OCI-LY7 (cell line): ENCODE measurements at regions of chr12 and their contacts with region 1.

Region 1: DNA sequence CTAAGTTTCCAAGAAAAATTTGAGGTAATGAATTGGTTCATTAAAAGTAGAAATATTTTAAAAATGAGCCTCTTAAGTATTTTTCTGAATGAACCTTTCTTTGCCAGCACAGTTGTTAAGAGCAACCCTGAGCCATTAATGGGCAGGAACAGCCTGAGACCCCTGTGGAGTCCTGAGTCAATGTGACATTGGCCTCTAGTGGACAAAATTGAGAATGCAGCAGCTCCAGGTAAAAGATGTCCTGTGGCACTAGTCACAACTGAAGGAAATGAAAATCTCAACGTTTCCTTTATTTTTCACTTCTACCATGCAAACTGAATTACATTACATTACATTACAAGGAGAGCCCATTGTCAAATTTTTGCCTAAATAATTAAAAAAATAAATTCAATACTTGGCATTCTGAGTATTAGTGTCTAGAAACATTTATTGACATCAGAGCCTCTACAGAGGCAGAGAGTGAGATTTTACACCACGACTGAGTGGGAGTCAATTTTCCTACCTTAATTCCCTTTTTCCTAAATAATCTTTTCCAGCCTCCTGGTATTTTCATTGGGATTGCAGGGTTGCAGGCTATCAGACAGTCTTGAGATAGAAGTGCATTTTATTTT is 135.7 kb downstream of the PPM1H start:
- DNase-seq: peak; percentile 76
- H3K4me3 ChIP-seq: no peak overlapping the region
- H3K27ac ChIP-seq: no peak overlapping the region
- H3K4me1 ChIP-seq: no peaks in the 10 kb centered on the region
- CTCF ChIP-seq: peak; percentile 94

Region 2: GRCh38 chr12:62581288-62582064 is 217.8 kb before region 1 on chr12:
- CTCF ChIA-PET with region 1: interaction called, 5 read pairs
- POLR2A ChIA-PET with region 1: interaction called, 4 read pairs
- intact Hi-C with region 1: loop called (anchors 1 kb)
- DNase-seq: peak; percentile 52
- H3K4me3 ChIP-seq: no peak overlapping the region
- H3K27ac ChIP-seq: no peak overlapping the region
- H3K4me1 ChIP-seq: no peaks in the 10 kb centered on the region
- CTCF ChIP-seq: peak; percentile 84